CD4-positive, alpha-beta memory T cell (primary cell): ENCODE measurements at regions of chr20 and their contacts with region 1.

Region 1: GRCh38 chr20:41173161-41173721 is 35.9 kb downstream of the PLCG1 start:
- DNase-seq: peak; percentile 50 to 61 (median 54)
- H3K4me3 ChIP-seq: no peak overlapping the region
- H3K4me3 Mint-ChIP-seq: no peak overlapping the region
- H3K27ac ChIP-seq: no peak overlapping the region
- H3K27ac Mint-ChIP-seq: peak overlapping the region in 6 of 7 donors; percentile 8 to 82 (median 56)
- H3K4me1 ChIP-seq: no peaks in the 10 kb centered on the region
- H3K4me1 Mint-ChIP-seq: peaks cover 0 to 29% (median 13%) of the 10 kb centered on the region in 4 donors
- H3K27me3 ChIP-seq: no peaks in the 10 kb centered on the region
- H3K27me3 Mint-ChIP-seq: no peaks in the 10 kb centered on the region

Region 2: DNA sequence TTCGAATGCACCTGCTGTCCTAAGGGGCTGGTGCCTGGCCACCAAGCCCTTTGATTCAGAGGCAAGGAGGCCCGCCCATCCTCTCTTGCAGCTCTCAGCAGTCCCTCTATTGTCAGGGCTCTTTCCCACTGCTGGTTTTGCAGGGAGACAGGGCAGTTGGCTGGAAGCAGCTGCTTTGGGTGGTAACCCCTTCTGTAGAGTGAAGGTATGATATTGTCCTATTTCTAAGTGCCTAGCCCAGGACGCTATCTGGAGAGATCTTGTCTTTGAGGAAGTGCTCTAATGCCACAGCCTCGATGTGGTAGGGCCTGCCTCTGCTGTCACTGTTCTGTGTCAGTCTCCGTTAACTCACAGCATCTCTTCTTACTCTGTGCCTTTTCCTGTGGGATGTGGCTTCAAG is 30.3 kb before region 1 on chr20:
- CTCF ChIA-PET with region 1: interaction called, 21 read pairs
- POLR2A ChIA-PET with region 1: interaction called, 22 read pairs
- intact Hi-C with region 1: no loop called
- DNase-seq: peak; percentile 49 to 82 (median 54)
- H3K4me3 ChIP-seq: peak overlapping the region in 1 of 2 donors; percentile 82
- H3K4me3 Mint-ChIP-seq: peak overlapping the region; percentile 93 to 99 (median 96)
- H3K27ac ChIP-seq: peak overlapping the region; percentile 84
- H3K27ac Mint-ChIP-seq: peak overlapping the region; percentile 88 to 98 (median 93)
- H3K4me1 ChIP-seq: peaks cover 89% of the 10 kb centered on the region
- H3K4me1 Mint-ChIP-seq: peaks cover 79 to 100% (median 87%) of the 10 kb centered on the region in 4 donors
- H3K27me3 ChIP-seq: no peaks in the 10 kb centered on the region
- H3K27me3 Mint-ChIP-seq: no peaks in the 10 kb centered on the region

Region 3: GRCh38 chr20:41149679-41150131 is 23.5 kb before region 1 on chr20:
- CTCF ChIA-PET with region 1: interaction called, 51 read pairs
- POLR2A ChIA-PET with region 1: interaction called, 70 read pairs
- intact Hi-C with region 1: no loop called
- DNase-seq: peak in 1 of 5 donors; percentile 38
- H3K4me3 ChIP-seq: no peak overlapping the region
- H3K4me3 Mint-ChIP-seq: peak overlapping the region in 7 of 8 donors; percentile 32 to 97 (median 63)
- H3K27ac ChIP-seq: peak overlapping the region; percentile 46
- H3K27ac Mint-ChIP-seq: peak overlapping the region; percentile 92 to 98 (median 96)
- H3K4me1 ChIP-seq: peaks cover 100% of the 10 kb centered on the region
- H3K4me1 Mint-ChIP-seq: peaks cover 84 to 100% (median 92%) of the 10 kb centered on the region in 4 donors
- H3K27me3 ChIP-seq: no peaks in the 10 kb centered on the region
- H3K27me3 Mint-ChIP-seq: no peaks in the 10 kb centered on the region

Region 4: DNA sequence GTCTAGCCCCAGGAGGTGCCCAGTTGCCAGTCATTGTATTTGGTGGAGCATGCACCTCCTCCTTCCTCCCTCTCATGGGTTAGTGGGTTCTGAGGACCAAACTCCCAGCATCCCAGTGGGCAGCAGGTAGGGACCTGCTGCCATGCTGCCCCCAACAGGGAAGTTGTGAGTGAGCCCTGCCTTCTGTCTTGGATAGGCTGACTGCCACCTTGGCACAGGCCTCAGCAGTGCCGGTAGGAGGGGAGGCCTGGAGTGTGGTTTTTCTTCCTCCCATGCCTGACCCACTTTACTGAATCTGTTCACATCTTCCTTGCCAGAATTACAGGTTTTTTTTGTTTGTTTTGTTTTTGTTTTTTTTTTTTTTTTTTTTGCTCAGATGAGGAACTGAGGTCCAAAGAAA is 11.4 kb before region 1 on chr20:
- CTCF ChIA-PET with region 1: interaction called, 51 read pairs
- POLR2A ChIA-PET with region 1: interaction called, 70 read pairs
- intact Hi-C with region 1: no loop called
- DNase-seq: peak in 2 of 5 donors; percentile 41 to 43
- H3K4me3 ChIP-seq: no peak overlapping the region
- H3K4me3 Mint-ChIP-seq: peak overlapping the region in 7 of 8 donors; percentile 26 to 86 (median 51)
- H3K27ac ChIP-seq: peak overlapping the region; percentile 73
- H3K27ac Mint-ChIP-seq: peak overlapping the region; percentile 87 to 99 (median 89)
- H3K4me1 ChIP-seq: peaks cover 64% of the 10 kb centered on the region
- H3K4me1 Mint-ChIP-seq: peaks cover 55 to 92% (median 70%) of the 10 kb centered on the region in 4 donors
- H3K27me3 ChIP-seq: no peaks in the 10 kb centered on the region
- H3K27me3 Mint-ChIP-seq: peaks cover 0 to 2% of the 10 kb centered on the region in 2 donors